BJ (cell line): ENCODE measurements at regions of chr19 and their contacts with region 1.

Region 1: GRCh38 chr19:35509861-35510625 is 3.4 kb downstream of the DMKN start:
- DNase-seq: no peak
- H3K4me3 ChIP-seq: peak overlapping the region; percentile 30
- H3K27me3 ChIP-seq: peaks cover 23% of the 10 kb centered on the region
- CTCF ChIP-seq: peak; percentile 96

Region 2: DNA sequence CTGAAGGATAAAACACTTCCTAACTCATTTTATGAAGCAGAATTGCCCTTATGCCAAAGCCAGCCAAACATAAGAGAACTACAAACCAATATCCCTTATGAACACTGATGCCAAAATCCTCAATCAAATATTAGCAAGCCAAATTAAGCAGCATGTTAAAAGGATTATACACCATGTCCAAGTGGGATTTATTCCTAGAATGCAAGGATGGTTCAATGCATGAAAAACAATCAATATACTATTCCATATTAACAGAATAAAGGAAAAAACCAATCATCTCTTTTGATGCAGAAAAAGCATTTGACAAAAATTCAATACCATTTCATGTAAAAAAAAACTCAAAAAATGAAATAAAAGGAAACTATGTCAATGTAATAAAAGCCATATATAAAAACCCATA is 557.0 kb before region 1 on chr19:
- CTCF ChIA-PET with region 1: no interaction called
- POLR2A ChIA-PET with region 1: no interaction called
- DNase-seq: no peak
- H3K4me3 ChIP-seq: no peak overlapping the region
- H3K27me3 ChIP-seq: no peaks in the 10 kb centered on the region
- CTCF ChIP-seq: no peak

Region 3: GRCh38 chr19:35528218-35529038 is 18.4 kb after region 1 on chr19 and contains the start of gene SBSN:
- CTCF ChIA-PET with region 1: interaction called, 12 read pairs
- POLR2A ChIA-PET with region 1: no interaction called
- DNase-seq: peak; percentile 18
- H3K4me3 ChIP-seq: no peak within 1 kb of the TSS
- H3K27me3 ChIP-seq: peaks cover 12% of the 10 kb centered on the region
- CTCF ChIP-seq: no peak
- polyA plus RNA-seq, gene SBSN: 0.70 and 1.6 TPM in 2 replicates

Region 4: GRCh38 chr19:35549174-35549788 is 39.2 kb after region 1 on chr19:
- CTCF ChIA-PET with region 1: interaction called, 33 read pairs
- POLR2A ChIA-PET with region 1: no interaction called
- DNase-seq: no peak
- H3K4me3 ChIP-seq: no peak overlapping the region
- H3K27me3 ChIP-seq: no peaks in the 10 kb centered on the region
- CTCF ChIP-seq: peak; percentile 68

Region 5: GRCh38 chr19:35592226-35592625 is 82.2 kb after region 1 on chr19:
- CTCF ChIA-PET with region 1: interaction called, 34 read pairs
- POLR2A ChIA-PET with region 1: no interaction called
- DNase-seq: no peak
- H3K4me3 ChIP-seq: no peak overlapping the region
- H3K27me3 ChIP-seq: no peaks in the 10 kb centered on the region
- CTCF ChIP-seq: peak; percentile 49